Activated T-helper 2 cell treated with anti-CD3 and anti-CD28 coated beads, Interferon-gamma antibody, Interleukin-2, Interleukin-4, amounts not matched to agents 10 μg/mL and 5 μg/mL and 100 μg/mL, durations not matched to agents 14 hours and 24 hours and 36 hours (primary cell): ENCODE measurements at regions of chr3 and their contacts with region 1.

Region 1: GRCh38 chr3:187164885-187165543 is 25.7 kb upstream of the RPL39L start:
- DNase-seq: peak; percentile 27
- H3K4me3 Mint-ChIP-seq: no peak overlapping the region
- H3K27ac Mint-ChIP-seq: no peak overlapping the region
- H3K4me1 Mint-ChIP-seq: peaks cover 2% of the 10 kb centered on the region
- H3K27me3 Mint-ChIP-seq: peaks cover 40% of the 10 kb centered on the region

Region 2: DNA sequence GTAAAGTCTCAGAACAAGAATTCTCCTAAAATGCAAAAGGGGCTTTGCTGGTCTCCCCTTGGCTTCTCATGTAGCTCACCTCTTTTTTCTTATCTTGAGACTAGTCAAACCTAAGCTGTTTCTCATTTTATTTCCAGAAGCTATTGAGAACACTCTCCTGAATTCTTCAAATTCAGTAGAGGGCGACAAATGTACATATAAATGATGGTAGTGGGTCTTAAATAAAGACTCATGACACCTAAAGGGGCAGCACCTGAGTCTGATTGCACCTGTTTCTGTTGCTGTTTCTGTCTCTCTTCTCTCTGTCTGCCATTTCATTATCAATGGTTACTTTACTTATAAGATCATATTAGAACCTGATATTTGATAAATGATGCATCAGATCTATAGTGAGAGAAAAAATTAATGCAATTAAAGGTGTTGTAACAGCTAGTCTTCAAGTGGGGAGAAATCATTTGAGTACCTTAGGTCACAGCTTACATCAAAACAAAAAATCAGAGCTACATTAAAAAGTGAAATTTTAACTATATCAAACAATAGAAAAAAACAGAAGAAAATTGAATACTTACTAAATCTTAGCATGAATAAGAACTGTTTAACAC is 315.5 kb before region 1 on chr3:
- intact Hi-C with region 1: loop called (anchors 1 kb)
- DNase-seq: no peak
- H3K4me3 Mint-ChIP-seq: no peak overlapping the region
- H3K27ac Mint-ChIP-seq: peak overlapping the region; percentile 3
- H3K4me1 Mint-ChIP-seq: peaks cover 13% of the 10 kb centered on the region
- H3K27me3 Mint-ChIP-seq: peaks cover 15% of the 10 kb centered on the region

Region 3: GRCh38 chr3:187082758-187083375 is 82.1 kb before region 1 on chr3:
- intact Hi-C with region 1: no loop called
- DNase-seq: no peak
- H3K4me3 Mint-ChIP-seq: no peak overlapping the region
- H3K27ac Mint-ChIP-seq: no peak overlapping the region
- H3K4me1 Mint-ChIP-seq: peaks cover 7% of the 10 kb centered on the region
- H3K27me3 Mint-ChIP-seq: no peaks in the 10 kb centered on the region

Region 4: GRCh38 chr3:187112934-187113793 is 51.9 kb before region 1 on chr3:
- intact Hi-C with region 1: loop called (anchors 1 kb)
- DNase-seq: no peak
- H3K4me3 Mint-ChIP-seq: no peak overlapping the region
- H3K27ac Mint-ChIP-seq: no peak overlapping the region
- H3K4me1 Mint-ChIP-seq: peaks cover 12% of the 10 kb centered on the region
- H3K27me3 Mint-ChIP-seq: no peaks in the 10 kb centered on the region